HEK293 (cell line): ENCODE measurements at regions of chr7 and their contacts with region 1.

Region 1: GRCh38 chr7:135662373-135663114 is at the start of gene STMP1:
- H3K4me3 ChIP-seq: peak within 1 kb of the TSS; percentile 98
- H3K27ac ChIP-seq: peak within 1 kb of the TSS; percentile 59; the same call in 1 of the 2 replicates
- H3K4me1 ChIP-seq: no peaks in the 10 kb centered on the region
- CTCF ChIP-seq: peak; percentile 93

Region 2: DNA sequence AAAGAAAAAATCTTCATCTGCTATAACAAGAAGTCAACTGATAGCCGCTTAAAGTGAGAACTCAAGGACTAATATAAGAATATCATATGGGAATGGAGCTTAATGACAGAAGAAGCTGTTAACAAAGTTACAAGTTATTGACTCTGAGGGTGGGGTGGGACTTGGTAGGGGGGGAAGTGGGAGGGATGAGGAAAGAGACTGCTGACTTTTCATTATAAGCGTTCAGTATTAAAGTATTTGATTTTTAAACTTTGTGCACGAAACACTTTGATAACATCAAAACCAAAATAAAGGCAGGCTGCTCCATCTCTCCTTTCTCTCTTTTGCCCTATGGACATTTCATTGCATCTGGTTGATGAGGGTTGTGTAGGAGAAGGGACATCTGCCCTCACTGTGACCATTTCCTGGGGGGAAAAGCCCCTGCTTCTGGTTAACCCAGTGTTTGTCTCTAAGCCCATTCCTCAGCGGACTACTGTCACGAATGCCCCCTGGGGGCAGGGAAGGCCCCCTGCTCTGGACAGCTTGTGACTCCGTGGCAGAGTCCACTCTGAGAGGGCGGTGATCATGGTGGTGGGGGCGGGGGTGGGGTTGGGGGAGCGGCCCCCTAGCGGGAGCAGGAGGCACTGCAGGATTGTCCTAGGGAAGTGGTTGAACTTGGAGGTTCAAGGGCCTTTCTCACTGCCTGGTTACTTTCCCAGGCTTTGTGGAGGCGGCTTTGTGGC is 48.0 kb after region 1 on chr7:
- CTCF ChIA-PET with region 1: interaction called, 12 read pairs
- POLR2A ChIA-PET with region 1: no interaction called
- H3K4me3 ChIP-seq: no peak overlapping the region
- H3K27ac ChIP-seq: no peak overlapping the region
- H3K4me1 ChIP-seq: peaks cover under 1% of the 10 kb centered on the region; the same call in 1 of the 2 replicates
- CTCF ChIP-seq: no peak

Region 3: GRCh38 chr7:135716677-135717238 is 54.2 kb after region 1 on chr7:
- CTCF ChIA-PET with region 1: interaction called, 12 read pairs
- POLR2A ChIA-PET with region 1: interaction called, 12 read pairs
- H3K4me3 ChIP-seq: no peak overlapping the region
- H3K27ac ChIP-seq: peak overlapping the region; percentile 6; the same call in 1 of the 2 replicates
- H3K4me1 ChIP-seq: peaks cover 10% of the 10 kb centered on the region
- CTCF ChIP-seq: no peak